ENCODE measurements at regions of chr10 and their contacts with region 1.

Region 1: DNA sequence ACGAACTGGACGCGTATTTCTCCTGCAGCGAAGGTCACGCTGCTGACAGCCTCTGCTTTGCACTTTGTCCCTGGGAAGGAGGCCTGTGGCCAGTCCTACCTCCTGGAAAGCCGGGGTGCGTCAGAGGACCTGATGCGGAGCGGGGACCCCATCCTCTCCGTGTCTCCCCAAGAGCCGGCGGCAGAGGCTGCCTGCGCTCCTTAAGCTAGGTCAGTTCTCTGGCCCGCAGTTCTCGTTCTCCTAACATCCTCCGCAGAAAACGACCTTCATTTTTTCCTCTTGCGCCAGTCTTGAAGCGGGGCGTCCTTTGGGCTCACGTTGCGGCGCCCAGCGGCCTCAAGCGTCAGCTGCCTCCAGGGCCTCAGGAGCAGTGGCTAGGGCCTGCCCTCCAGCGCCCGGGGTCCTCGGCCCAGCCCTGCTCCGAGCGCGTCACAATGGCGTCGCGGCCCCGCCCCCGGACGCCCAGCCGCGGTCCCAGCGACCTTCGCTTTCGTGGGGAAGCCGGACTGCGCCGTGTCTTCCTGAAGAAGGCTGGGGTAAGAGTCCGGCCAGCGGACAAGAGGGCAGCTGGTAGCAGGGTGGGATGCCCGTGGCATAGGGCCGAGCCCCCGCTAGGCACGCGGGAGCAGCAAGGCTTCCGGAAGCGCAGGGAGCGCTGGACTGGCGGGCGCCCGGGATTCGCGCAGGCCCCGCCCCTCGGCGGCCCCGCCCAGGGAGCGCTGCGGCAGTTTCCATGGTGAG is at the start of gene ZNF487:
- DNase-seq: peak; percentile 90
- ATAC-seq: peak; percentile 95
- H3K4me3 Mint-ChIP-seq: peak within 1 kb of the TSS; percentile 90
- H3K27ac Mint-ChIP-seq: peak within 1 kb of the TSS; percentile 97
- H3K4me1 Mint-ChIP-seq: peaks cover 11% of the 10 kb centered on the region
- H3K27me3 Mint-ChIP-seq: no peaks in the 10 kb centered on the region
- CTCF ChIP-seq: no peak
- total RNA-seq, gene ZNF487: 1.4 to 1.9 TPM

Region 2: DNA sequence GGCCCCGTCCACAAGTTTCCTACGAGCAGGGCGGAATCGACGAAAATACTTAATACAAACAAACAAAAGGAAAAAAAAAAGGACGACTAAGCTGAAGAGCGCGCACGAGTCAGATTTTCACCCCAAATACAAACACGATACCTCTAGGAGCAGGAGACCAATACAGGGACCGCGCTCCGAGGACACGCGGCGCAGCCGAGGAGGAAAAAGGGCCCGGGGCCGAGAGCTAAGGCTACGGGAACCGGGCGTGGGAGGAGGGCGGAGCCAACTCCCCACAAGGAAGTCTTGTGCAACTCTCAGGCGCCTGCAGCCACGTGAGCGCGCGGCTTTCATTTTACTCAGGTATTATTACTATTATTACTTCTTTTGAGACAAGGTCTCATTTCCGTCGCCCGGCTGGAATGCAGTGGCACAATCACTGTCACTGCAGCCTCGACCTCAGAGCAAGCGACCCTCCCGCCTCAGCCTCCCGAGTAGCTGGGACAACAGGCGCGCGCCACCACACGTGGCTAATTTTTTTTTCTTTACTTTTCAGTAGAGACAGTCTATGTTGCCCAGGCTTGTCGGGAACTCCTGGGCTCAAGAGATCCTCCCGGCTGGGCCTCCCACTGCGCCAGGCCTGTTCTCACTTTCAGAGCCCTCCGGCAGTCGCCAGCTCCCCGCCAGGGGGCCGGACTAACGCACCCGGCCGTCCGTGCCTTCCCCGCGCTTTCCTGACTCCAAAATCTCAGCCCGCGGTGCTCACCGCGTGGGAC is 28.8 kb before region 1 on chr10:
- CTCF ChIA-PET with region 1: no interaction called
- POLR2A ChIA-PET with region 1: interaction called, 10 read pairs
- intact Hi-C with region 1: no loop called
- DNase-seq: peak; percentile 97
- ATAC-seq: peak; percentile 35
- H3K4me3 Mint-ChIP-seq: peak overlapping the region; percentile 99
- H3K27ac Mint-ChIP-seq: peak overlapping the region; percentile 100
- H3K4me1 Mint-ChIP-seq: peaks cover 24% of the 10 kb centered on the region
- H3K27me3 Mint-ChIP-seq: no peaks in the 10 kb centered on the region
- CTCF ChIP-seq: peak; percentile 56

Region 3: DNA sequence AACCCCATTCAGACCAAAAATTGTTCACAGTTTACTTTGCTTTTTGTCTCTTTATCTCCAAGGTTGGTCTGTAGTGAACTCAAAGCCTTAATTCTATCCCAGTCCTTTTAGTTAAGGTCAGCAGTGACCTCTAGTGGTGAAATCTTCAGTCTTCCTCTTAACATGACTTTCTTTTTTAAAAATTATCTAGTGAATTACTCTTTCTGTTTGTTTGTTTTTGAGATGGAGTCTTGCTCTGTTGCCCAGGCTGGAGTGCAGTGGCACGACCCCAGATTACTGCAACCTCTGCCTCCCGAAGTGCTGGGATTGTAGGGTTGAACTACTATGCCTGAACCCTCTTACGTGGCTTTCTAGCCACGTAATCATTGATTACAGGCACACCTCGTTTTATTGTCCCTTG is 25.4 kb after region 1 on chr10:
- CTCF ChIA-PET with region 1: no interaction called
- POLR2A ChIA-PET with region 1: no interaction called
- intact Hi-C with region 1: no loop called
- DNase-seq: peak; percentile 38
- ATAC-seq: peak; percentile 82
- H3K4me3 Mint-ChIP-seq: no peak overlapping the region
- H3K27ac Mint-ChIP-seq: no peak overlapping the region
- H3K4me1 Mint-ChIP-seq: peaks cover 5% of the 10 kb centered on the region
- H3K27me3 Mint-ChIP-seq: no peaks in the 10 kb centered on the region
- CTCF ChIP-seq: peak; percentile 75

Region 4: DNA sequence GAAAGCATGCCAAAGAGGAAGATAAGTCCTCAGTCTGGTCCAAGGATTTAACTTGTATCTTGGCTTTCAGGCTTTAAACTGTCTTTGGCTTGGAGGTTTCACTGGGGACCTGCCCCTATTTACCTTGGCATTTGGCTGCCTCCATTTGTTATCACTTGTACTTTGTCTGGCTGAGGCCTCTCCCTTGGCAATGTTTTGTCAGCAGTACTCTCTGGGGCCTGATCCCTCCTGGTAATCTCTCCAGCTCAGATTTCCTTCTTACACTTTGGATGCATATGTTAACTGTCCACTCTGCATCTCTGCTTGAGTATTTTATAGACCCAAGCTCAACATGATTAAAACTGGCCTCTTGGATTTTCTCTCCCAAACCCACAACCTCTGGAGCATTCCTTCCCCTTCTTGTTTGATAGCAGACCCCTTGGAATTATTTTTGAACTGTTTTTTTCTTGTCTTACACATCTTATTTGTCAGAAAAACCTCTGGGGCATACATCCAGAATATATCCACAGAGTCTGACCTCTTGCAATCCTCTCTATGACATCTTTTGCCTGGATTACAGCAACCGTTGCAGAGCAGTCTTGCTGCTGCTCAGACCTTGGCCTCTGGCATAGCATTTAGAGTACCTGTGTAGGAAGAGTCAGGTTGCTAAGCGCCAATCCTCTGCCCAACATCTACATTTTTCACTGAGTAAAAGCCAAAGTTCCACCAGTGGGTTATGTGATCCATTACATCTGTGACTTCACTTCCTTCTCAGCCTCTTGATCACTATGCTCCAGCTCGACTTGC is 35.6 kb after region 1 on chr10:
- CTCF ChIA-PET with region 1: no interaction called
- POLR2A ChIA-PET with region 1: no interaction called
- intact Hi-C with region 1: no loop called
- DNase-seq: no peak
- ATAC-seq: no peak
- H3K4me3 Mint-ChIP-seq: no peak overlapping the region
- H3K27ac Mint-ChIP-seq: no peak overlapping the region
- H3K4me1 Mint-ChIP-seq: no peaks in the 10 kb centered on the region
- H3K27me3 Mint-ChIP-seq: no peaks in the 10 kb centered on the region
- CTCF ChIP-seq: no peak

Measured in activated CD8-positive, alpha-beta T cell treated with anti-CD3 and anti-CD28 coated beads for 36 hours (primary cell).